ENCODE measurements at regions of chr14 and their contacts with region 1.

Region 1: GRCh38 chr14:89303457-89304435 is 113.3 kb downstream of the FOXN3 start:
- DNase-seq: peak; percentile 91
- H3K4me3 ChIP-seq: peak overlapping the region; percentile 1 to 28 (median 20)
- H3K27ac ChIP-seq: peak overlapping the region; percentile 87 to 95 (median 90)
- H3K4me1 ChIP-seq: peaks cover 0 to 53% (median 45%) of the 10 kb centered on the region in 4 donors
- H3K27me3 ChIP-seq: no peaks in the 10 kb centered on the region
- CTCF ChIP-seq: no peak
- EP300 ChIP-seq: peak; percentile 81 to 98 (median 86)
- POLR2A ChIP-seq: no peak

Region 2: DNA sequence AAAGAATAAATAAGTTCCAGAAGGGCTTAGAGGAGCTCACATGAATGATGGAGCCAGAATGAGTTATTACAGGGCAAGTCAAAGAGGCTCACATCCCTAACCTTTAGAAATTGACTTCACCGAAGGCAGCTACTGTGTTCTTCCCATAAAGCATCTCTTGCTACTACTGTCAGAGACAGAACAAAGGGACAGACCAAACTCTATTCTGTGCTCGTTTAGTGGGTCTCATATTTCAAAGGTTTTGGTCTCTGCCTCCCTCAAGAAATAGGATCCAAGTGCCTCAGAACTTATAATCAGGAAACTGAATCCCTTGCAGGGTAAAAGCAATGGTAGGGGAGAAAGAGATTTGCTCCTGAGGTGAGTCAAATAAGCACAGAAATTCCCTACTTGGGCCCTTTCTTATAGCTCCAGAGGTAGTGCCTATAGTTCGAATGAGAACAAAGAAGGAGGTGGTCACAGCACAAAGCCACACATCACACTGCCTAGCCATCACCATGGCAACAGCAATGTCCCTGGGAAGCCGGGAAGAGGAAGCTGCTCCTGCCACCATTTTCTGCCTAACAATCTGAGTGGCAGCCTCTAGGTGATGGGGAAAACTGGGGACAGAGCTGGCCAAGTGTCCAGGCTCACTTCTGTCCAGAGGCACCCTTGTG is 181.7 kb before region 1 on chr14:
- intact Hi-C with region 1: no loop called
- DNase-seq: no peak
- H3K4me3 ChIP-seq: no peak overlapping the region
- H3K27ac ChIP-seq: no peak overlapping the region
- H3K4me1 ChIP-seq: no peaks in the 10 kb centered on the region
- H3K27me3 ChIP-seq: no peaks in the 10 kb centered on the region
- CTCF ChIP-seq: no peak
- EP300 ChIP-seq: no peak
- POLR2A ChIP-seq: no peak

Region 3: DNA sequence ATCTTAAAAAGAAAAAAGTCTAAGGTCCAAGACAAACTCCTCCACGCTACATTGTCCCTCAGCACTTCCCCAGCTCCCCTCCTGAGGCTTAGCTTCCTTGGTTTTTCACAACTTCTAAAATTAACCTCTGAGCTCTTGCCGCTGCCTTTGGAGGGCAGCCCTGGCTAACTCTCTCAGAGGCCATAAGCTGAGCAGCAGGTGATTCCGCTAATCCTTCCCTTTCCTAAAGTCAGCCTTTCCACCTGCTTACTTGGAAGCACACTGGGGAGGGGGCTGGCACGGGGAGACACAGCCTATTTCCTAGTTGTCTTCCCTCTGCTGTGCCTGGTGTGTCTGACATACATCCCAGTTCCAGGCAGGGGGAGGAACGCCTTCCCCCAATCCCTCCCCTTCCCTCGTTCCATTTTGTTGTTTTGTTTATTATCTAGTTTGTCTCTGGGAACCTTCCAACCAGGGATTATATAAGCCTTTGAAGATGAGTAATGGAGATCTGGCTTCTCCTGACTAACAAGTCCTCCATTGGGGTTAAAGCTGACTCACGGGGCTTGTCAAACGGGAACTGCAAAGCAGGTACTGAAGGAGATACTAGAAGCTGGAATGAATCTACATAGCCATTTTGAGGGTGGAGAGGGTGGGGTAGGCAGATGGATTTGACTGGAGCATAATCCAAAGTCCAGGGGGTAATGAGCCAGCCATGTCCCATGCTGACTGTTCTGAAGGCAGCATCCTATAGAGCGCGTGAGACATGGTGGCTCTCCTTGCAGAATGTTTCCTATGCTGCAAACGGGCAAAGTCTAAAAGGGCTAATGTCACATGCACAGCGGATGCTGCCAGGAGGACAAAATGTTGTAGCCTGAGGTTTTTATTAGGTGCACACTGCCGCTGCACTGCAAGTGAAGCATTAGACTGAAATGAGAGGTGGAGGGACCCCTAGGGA is 117.6 kb before region 1 on chr14:
- intact Hi-C with region 1: no loop called
- DNase-seq: no peak
- H3K4me3 ChIP-seq: no peak overlapping the region
- H3K27ac ChIP-seq: peak overlapping the region in 2 of 4 donors; percentile 6 to 22
- H3K4me1 ChIP-seq: peaks cover 0 to 22% (median 18%) of the 10 kb centered on the region in 4 donors
- H3K27me3 ChIP-seq: no peaks in the 10 kb centered on the region
- CTCF ChIP-seq: no peak
- EP300 ChIP-seq: no peak
- POLR2A ChIP-seq: no peak

Region 4: GRCh38 chr14:89384023-89384422 is 80.3 kb after region 1 on chr14:
- intact Hi-C with region 1: loop called (anchors 10 kb)
- DNase-seq: peak; percentile 45
- H3K4me3 ChIP-seq: no peak overlapping the region
- H3K27ac ChIP-seq: no peak overlapping the region
- H3K4me1 ChIP-seq: peaks cover 0 to 68% (median 52%) of the 10 kb centered on the region in 4 donors
- H3K27me3 ChIP-seq: no peaks in the 10 kb centered on the region
- CTCF ChIP-seq: no peak
- EP300 ChIP-seq: no peak
- POLR2A ChIP-seq: no peak